GM12878 (cell line): ENCODE measurements at regions of chr11 and their contacts with region 1.

Region 1: GRCh38 chr11:95231127-95231880 is at the start of gene SESN3:
- DNase-seq: peak; percentile 93
- ATAC-seq: peak; percentile 89
- H3K4me3 ChIP-seq: peak within 1 kb of the TSS; percentile 62
- H3K27ac ChIP-seq: no peak within 1 kb of the TSS
- H3K4me1 ChIP-seq: peaks cover 8% of the 10 kb centered on the region
- H3K27me3 ChIP-seq: peaks cover 0 to 27% of the 10 kb centered on the region in 2 experiments; a peak in 2 of 4 replicates
- CTCF ChIP-seq: no peak; a peak in 1 of 6 replicates
- EP300 ChIP-seq: peak in 1 of 2 experiments; percentile 23; a peak in 1 of 4 replicates
- POLR2A ChIP-seq: peak; percentile 57; the same call in 1 of the 2 replicates
- RAD21 ChIP-seq: peak; percentile 35; the same call in 1 of the 2 replicates
- polyA plus RNA-seq, gene SESN3: 0.68 to 1.5 TPM

Region 2: DNA sequence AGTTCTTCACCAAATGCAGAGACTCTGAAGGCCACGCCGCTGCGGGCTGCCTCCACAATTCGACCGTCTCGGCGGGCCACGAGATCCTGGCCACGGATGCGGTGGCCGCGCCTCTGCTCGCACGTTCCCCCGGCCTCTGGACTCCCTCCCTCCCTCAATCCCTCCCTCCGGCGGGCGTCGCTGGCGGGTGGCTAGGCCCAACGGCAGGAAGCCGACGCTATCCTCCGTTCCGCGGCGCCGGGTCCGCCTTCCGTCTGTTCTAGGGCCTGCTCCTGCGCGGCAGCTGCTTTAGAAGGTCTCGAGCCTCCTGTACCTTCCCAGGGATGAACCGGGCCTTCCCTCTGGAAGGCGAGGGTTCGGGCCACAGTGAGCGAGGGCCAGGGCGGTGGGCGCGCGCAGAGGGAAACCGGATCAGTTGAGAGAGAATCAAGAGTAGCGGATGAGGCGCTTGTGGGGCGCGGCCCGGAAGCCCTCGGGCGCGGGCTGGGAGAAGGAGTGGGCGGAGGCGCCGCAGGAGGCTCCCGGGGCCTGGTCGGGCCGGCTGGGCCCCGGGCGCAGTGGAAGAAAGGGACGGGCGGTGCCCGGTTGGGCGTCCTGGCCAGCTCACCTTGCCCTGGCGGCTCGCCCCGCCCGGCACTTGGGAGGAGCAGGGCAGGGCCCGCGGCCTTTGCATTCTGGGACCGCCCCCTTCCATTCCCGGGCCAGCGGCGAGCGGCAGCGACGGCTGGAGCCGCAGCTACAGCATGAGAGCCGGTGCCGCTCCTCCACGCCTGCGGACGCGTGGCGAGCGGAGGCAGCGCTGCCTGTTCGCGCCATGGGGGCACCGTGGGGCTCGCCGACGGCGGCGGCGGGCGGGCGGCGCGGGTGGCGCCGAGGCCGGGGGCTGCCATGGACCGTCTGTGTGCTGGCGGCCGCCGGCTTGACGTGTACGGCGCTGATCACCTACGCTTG is 687.3 kb before region 1 on chr11 and contains the start of gene FUT4:
- CTCF ChIA-PET with region 1: no interaction called
- POLR2A ChIA-PET with region 1: no interaction called
- RAD21 ChIA-PET with region 1: no interaction called
- SMC1A ChIA-PET with region 1: no interaction called
- in situ Hi-C with region 1: no loop called
- intact Hi-C with region 1: no loop called
- DNase-seq: no peak
- ATAC-seq: peak; percentile 88
- H3K4me3 ChIP-seq: peak within 1 kb of the TSS; percentile 80
- H3K27ac ChIP-seq: peak within 1 kb of the TSS; percentile 79
- H3K4me1 ChIP-seq: no peaks in the 10 kb centered on the region
- H3K27me3 ChIP-seq: no peaks in the 10 kb centered on the region
- CTCF ChIP-seq: peak in 1 of 3 experiments; percentile 2; a peak in 2 of 6 replicates
- EP300 ChIP-seq: no peak
- POLR2A ChIP-seq: peak; percentile 80
- RAD21 ChIP-seq: no peak
- polyA plus RNA-seq, gene FUT4: 0.68 TPM

Region 3: DNA sequence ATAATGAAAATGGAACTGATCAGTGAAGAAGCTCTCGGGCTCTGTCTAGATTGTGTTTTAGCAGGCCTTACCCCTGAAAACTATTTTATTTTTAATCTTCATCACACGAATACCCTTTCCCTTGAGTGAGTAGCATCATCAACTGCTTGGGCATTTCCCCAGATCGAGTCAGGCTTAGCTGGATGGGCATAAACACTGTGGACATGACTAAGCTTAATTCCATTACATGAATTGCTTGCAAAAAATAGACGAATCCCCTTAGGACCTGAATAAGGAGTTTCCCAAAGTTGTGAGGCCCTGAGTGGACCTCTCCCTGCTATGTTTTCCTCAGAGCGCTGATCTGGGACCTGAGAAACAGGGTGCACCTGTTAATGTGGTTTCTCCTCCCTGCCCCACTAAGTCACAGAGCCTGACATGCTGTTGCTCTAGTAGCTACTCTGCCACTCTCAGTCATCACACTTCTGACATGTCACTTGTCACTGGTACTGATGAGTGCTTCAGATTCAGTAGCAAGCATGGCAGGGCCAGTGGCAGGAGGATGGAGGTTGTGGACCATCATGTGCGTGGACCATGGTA is 88.1 kb before region 1 on chr11:
- CTCF ChIA-PET with region 1: no interaction called
- POLR2A ChIA-PET with region 1: no interaction called
- RAD21 ChIA-PET with region 1: no interaction called
- SMC1A ChIA-PET with region 1: no interaction called
- in situ Hi-C with region 1: no loop called
- intact Hi-C with region 1: no loop called
- DNase-seq: no peak
- ATAC-seq: no peak
- H3K4me3 ChIP-seq: no peak overlapping the region
- H3K27ac ChIP-seq: no peak overlapping the region
- H3K4me1 ChIP-seq: no peaks in the 10 kb centered on the region
- H3K27me3 ChIP-seq: 0 out of 4 replicates have a peak, but pooled peaks cover 0 to 2% of the 10 kb centered on the region in 2 experiments
- CTCF ChIP-seq: no peak
- EP300 ChIP-seq: no peak
- POLR2A ChIP-seq: no peak
- RAD21 ChIP-seq: no peak

Region 4: DNA sequence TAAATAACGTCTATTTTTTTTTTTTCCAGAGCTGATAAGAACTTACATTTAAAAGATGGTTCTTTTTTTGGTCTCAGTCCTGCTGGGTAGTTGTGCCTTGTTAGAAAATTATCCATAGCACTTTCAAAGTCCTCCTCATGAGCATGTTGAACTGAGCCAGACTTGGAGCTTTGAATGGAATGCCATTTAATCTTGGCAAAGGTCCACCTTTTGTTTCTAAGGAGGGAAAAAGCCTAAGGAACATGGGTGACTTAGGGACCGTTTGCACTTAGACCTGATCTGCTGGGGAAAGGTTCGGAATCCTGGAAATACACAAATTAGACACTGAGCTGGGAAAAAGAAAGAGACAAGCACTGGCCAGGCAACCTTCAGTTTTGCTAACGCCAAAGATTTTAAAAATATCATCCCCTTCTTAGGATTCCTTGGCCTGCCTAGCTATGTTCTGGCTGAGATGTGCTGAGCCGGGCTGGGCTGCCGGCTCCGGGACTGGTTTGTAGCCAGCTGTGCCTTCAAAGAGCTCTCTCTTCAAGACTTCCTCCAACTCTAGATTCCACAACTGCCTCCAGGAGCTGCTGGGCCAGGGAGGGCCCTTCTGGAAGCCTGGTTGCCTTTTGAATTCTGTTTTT is 74.3 kb before region 1 on chr11:
- CTCF ChIA-PET with region 1: interaction called, 38 read pairs
- POLR2A ChIA-PET with region 1: interaction called, 9 read pairs
- RAD21 ChIA-PET with region 1: interaction called, 48 read pairs
- SMC1A ChIA-PET with region 1: interaction called, 76 read pairs
- in situ Hi-C with region 1: no loop called
- intact Hi-C with region 1: no loop called
- DNase-seq: no peak
- ATAC-seq: no peak
- H3K4me3 ChIP-seq: no peak overlapping the region
- H3K27ac ChIP-seq: no peak overlapping the region
- H3K4me1 ChIP-seq: peaks cover 2% of the 10 kb centered on the region; the same call in 1 of the 2 replicates
- H3K27me3 ChIP-seq: no peaks in the 10 kb centered on the region; a peak in 1 of 4 replicates
- CTCF ChIP-seq: no peak
- EP300 ChIP-seq: no peak
- POLR2A ChIP-seq: no peak
- RAD21 ChIP-seq: no peak

Region 5: DNA sequence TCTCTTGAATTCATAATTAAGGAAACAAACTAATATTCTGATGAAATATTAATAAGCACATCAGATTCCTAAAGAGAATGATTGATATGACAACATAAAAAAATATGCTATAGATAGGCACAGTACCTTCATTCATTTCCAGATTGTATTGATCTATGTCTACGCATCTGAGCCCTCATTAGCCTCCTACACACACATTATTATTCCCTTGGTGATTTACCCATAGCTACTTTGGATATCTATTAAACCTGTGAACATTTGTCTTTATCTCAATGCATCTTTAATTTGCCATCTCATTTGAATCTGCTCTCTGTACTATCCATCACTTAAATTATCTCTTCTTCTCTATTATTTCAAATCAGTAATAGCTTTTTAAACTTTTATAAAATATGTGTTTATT is 18.7 kb before region 1 on chr11:
- CTCF ChIA-PET with region 1: interaction called, 12 read pairs
- POLR2A ChIA-PET with region 1: interaction called, 31 read pairs
- RAD21 ChIA-PET with region 1: interaction called, 18 read pairs
- SMC1A ChIA-PET with region 1: interaction called, 53 read pairs
- in situ Hi-C with region 1: no loop called
- intact Hi-C with region 1: no loop called
- DNase-seq: no peak
- ATAC-seq: no peak
- H3K4me3 ChIP-seq: no peak overlapping the region
- H3K27ac ChIP-seq: no peak overlapping the region
- H3K4me1 ChIP-seq: no peaks in the 10 kb centered on the region
- H3K27me3 ChIP-seq: no peaks in the 10 kb centered on the region
- CTCF ChIP-seq: no peak
- EP300 ChIP-seq: no peak
- POLR2A ChIP-seq: no peak
- RAD21 ChIP-seq: no peak

Region 6: GRCh38 chr11:95279921-95280868 is 48.9 kb after region 1 on chr11:
- CTCF ChIA-PET with region 1: interaction called, 5 read pairs
- POLR2A ChIA-PET with region 1: no interaction called
- RAD21 ChIA-PET with region 1: interaction called, 3 read pairs
- SMC1A ChIA-PET with region 1: interaction called, 14 read pairs
- in situ Hi-C with region 1: no loop called
- intact Hi-C with region 1: no loop called
- DNase-seq: no peak
- ATAC-seq: peak; percentile 68
- H3K4me3 ChIP-seq: no peak overlapping the region
- H3K27ac ChIP-seq: no peak overlapping the region
- H3K4me1 ChIP-seq: peaks cover 6% of the 10 kb centered on the region
- H3K27me3 ChIP-seq: peaks cover 0 to 10% of the 10 kb centered on the region in 2 experiments; a peak in 3 of 4 replicates
- CTCF ChIP-seq: no peak
- EP300 ChIP-seq: no peak
- POLR2A ChIP-seq: no peak
- RAD21 ChIP-seq: no peak

Region 7: DNA sequence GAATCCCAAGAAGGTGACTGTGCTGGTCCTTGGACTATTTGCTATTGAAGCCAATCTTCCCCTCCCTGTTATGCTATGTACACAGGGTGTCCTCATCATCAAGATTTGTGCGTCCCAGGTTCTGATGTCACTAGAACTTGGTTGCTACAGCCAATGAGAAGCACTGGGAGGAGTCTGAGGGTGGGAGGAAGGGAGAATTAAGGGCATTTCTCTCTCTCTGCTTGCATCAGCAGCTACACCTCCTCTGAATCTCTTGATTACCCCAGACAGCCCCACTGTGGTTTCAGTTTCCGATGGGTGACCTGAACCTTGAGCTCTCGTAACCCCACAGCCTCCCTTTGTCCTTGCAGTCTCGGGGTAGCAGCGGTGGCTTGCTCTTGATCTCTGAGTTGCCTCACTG is 212.1 kb after region 1 on chr11:
- CTCF ChIA-PET with region 1: no interaction called
- POLR2A ChIA-PET with region 1: no interaction called
- RAD21 ChIA-PET with region 1: interaction called, 13 read pairs
- SMC1A ChIA-PET with region 1: interaction called, 4 read pairs
- in situ Hi-C with region 1: no loop called
- intact Hi-C with region 1: no loop called
- DNase-seq: peak; percentile 48
- ATAC-seq: peak; percentile 100
- H3K4me3 ChIP-seq: no peak overlapping the region
- H3K27ac ChIP-seq: no peak overlapping the region
- H3K4me1 ChIP-seq: no peaks in the 10 kb centered on the region; the same call in 1 of the 2 replicates
- H3K27me3 ChIP-seq: peaks cover 0 to 2% of the 10 kb centered on the region in 2 experiments; a peak in 1 of 4 replicates
- CTCF ChIP-seq: no peak
- EP300 ChIP-seq: peak in 1 of 2 experiments; percentile 21; a peak in 1 of 4 replicates
- POLR2A ChIP-seq: no peak
- RAD21 ChIP-seq: no peak

Region 8: GRCh38 chr11:95764267-95764898 is 533.1 kb after region 1 on chr11:
- CTCF ChIA-PET with region 1: interaction called, 6 read pairs
- POLR2A ChIA-PET with region 1: interaction called, 3 read pairs
- RAD21 ChIA-PET with region 1: interaction called, 25 read pairs
- SMC1A ChIA-PET with region 1: interaction called, 8 read pairs
- in situ Hi-C with region 1: no loop called
- intact Hi-C with region 1: no loop called
- DNase-seq: no peak
- ATAC-seq: peak; percentile 91
- H3K4me3 ChIP-seq: no peak overlapping the region
- H3K27ac ChIP-seq: no peak overlapping the region
- H3K4me1 ChIP-seq: no peaks in the 10 kb centered on the region
- H3K27me3 ChIP-seq: no peaks in the 10 kb centered on the region
- CTCF ChIP-seq: peak; percentile 43 to 66 (median 46); a peak in 5 of 6 replicates
- EP300 ChIP-seq: no peak
- POLR2A ChIP-seq: no peak
- RAD21 ChIP-seq: peak; percentile 83